Naive thymus-derived CD4-positive, alpha-beta T cell (primary cell): ENCODE measurements at regions of chr20 and their contacts with region 1.

Region 1: DNA sequence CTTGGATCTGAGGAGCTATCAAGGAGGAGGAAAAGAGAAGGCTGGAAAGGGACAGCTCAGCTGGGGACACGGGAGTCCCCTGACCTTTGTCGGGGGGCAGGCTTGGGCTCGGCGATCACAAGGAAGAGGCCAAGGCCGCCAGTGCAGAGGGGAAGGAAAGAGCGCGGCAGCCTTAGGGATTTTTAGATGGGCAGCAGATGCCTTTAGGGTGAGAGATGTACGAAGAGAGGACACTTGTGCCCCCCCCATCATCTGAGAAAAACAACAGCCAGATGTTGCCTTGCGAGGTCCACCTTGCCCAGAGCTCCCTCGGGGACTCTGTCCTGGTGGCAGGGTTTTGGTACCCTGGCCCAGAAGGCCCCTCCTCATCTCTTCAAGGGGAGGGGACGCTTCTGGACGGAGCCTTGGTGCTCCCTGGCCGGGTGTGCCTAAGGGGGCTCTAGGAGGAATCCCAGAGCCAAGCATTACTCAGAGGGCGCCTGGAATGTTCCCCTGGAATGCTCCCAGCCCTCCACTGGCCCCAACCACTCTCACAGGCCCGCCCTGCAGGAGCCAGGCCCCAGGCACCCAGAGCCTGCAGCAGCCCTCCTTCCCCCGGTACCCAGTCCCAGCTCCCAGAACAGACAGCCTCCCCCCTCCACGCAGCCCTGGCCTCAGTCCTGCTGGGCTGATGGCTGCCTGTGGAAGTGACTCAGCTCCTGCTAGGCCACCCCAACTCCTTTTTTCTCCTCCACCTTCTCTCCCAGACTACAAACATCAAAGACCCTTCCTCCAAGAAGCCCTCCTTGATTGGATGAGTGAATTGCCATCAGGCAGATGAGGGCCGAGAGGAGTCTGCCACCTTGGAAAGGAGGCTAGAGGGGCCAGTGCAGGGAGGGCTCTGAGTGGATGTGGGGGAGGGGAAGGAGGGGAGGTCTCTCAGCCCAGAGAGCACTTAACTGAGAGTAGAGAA is 1.8 kb downstream of the ADAM33 start:
- DNase-seq: no peak
- ATAC-seq: no peak
- H3K4me3 ChIP-seq: no peak overlapping the region
- H3K4me3 Mint-ChIP-seq: no peak overlapping the region
- H3K27ac ChIP-seq: no peak overlapping the region
- H3K27ac Mint-ChIP-seq: no peak overlapping the region
- H3K4me1 ChIP-seq: no peaks in the 10 kb centered on the region
- H3K4me1 Mint-ChIP-seq: peaks cover 0 to 9% (median 4%) of the 10 kb centered on the region in 7 donors
- H3K27me3 ChIP-seq: no peaks in the 10 kb centered on the region
- H3K27me3 Mint-ChIP-seq: peaks cover 47 to 71% (median 60%) of the 10 kb centered on the region in 5 donors

Region 2: GRCh38 chr20:3652676-3653596 is 27.1 kb before region 1 on chr20:
- CTCF ChIA-PET with region 1: no interaction called
- POLR2A ChIA-PET with region 1: no interaction called
- intact Hi-C with region 1: no loop called
- DNase-seq: no peak
- ATAC-seq: no peak
- H3K4me3 ChIP-seq: no peak overlapping the region
- H3K4me3 Mint-ChIP-seq: no peak overlapping the region
- H3K27ac ChIP-seq: no peak overlapping the region
- H3K27ac Mint-ChIP-seq: peak overlapping the region in 2 of 9 donors; percentile 17 to 21
- H3K4me1 ChIP-seq: no peaks in the 10 kb centered on the region
- H3K4me1 Mint-ChIP-seq: peaks cover 0 to 10% (median 0%) of the 10 kb centered on the region in 7 donors
- H3K27me3 ChIP-seq: no peaks in the 10 kb centered on the region
- H3K27me3 Mint-ChIP-seq: peaks cover 0 to 8% (median 0%) of the 10 kb centered on the region in 5 donors

Region 3: GRCh38 chr20:3710703-3711483 is 30.9 kb after region 1 on chr20:
- CTCF ChIA-PET with region 1: interaction called, 5 read pairs
- POLR2A ChIA-PET with region 1: no interaction called
- intact Hi-C with region 1: loop called (anchors 1 kb)
- DNase-seq: peak; percentile 43 to 86 (median 61)
- ATAC-seq: peak; percentile 62
- H3K4me3 ChIP-seq: no peak overlapping the region
- H3K4me3 Mint-ChIP-seq: no peak overlapping the region
- H3K27ac ChIP-seq: no peak overlapping the region
- H3K27ac Mint-ChIP-seq: no peak overlapping the region
- H3K4me1 ChIP-seq: no peaks in the 10 kb centered on the region
- H3K4me1 Mint-ChIP-seq: peaks cover 0 to 3% (median 0%) of the 10 kb centered on the region in 7 donors
- H3K27me3 ChIP-seq: no peaks in the 10 kb centered on the region
- H3K27me3 Mint-ChIP-seq: peaks cover 6 to 10% (median 7%) of the 10 kb centered on the region in 5 donors

Region 4: DNA sequence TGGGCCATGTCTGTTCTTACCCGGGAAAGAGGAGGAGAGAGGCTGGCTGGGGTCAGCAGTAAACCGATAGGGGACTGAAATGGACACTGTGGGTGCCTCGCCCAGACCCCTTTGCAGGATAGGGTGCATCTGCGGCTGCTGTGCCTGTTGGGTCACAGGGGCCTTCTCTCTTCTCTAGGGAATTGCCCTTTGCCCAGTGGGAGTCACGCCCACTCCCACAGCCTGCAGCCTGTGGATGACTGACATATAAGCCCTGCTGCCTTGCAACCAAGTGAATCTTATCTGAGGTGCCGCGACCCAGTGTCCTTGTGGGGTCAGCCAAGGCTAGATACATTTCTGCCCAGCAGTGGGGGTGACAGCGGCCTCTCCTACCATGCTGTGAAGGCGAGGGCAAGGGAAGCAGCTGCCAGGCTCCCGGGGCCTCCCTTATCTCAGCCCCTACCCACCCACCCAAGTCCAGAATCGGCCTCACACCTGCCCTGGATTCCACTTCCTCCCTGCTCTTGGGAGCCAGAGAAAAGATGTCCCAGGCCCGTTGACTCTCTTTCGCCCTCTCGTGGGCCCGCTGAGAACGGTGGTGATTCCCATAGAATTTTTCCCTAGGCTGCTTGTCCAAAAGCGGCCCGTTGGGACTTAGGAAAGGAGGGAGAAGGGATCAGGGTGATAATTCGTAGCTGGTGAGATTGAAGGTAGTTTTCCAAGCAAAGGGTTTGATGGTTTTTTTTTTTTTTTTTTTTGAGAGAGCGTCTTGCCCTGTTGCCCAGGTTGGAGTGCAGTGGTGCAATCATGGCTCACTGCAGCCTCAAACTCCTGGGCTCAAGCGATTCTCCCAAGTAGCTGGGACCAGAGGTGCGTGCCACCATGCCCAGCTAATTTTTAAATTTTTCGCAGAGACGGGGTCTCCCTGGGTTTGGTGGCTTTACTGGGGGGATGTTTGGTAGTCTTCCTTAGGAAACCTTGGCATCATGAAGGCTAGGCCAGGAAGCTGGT is 411.8 kb after region 1 on chr20:
- CTCF ChIA-PET with region 1: no interaction called
- POLR2A ChIA-PET with region 1: no interaction called
- intact Hi-C with region 1: loop called in 1 of 2 experiments (anchors 1 kb)
- DNase-seq: peak in 6 of 9 donors; percentile 6 to 62 (median 18)
- ATAC-seq: peak; percentile 51
- H3K4me3 ChIP-seq: no peak overlapping the region
- H3K4me3 Mint-ChIP-seq: no peak overlapping the region
- H3K27ac ChIP-seq: no peak overlapping the region
- H3K27ac Mint-ChIP-seq: peak overlapping the region in 1 of 9 donors; percentile 37
- H3K4me1 ChIP-seq: no peaks in the 10 kb centered on the region
- H3K4me1 Mint-ChIP-seq: peaks cover 0 to 5% (median 0%) of the 10 kb centered on the region in 7 donors
- H3K27me3 ChIP-seq: no peaks in the 10 kb centered on the region
- H3K27me3 Mint-ChIP-seq: peaks cover 9 to 23% (median 11%) of the 10 kb centered on the region in 5 donors

Region 5: GRCh38 chr20:4592316-4593148 is 912.5 kb after region 1 on chr20:
- CTCF ChIA-PET with region 1: no interaction called
- POLR2A ChIA-PET with region 1: no interaction called
- intact Hi-C with region 1: loop called in 1 of 2 experiments (anchors 1 kb)
- DNase-seq: peak; percentile 8 to 77 (median 51)
- ATAC-seq: peak; percentile 84
- H3K4me3 ChIP-seq: peak overlapping the region; percentile 56
- H3K4me3 Mint-ChIP-seq: peak overlapping the region; percentile 59 to 83 (median 76)
- H3K27ac ChIP-seq: no peak overlapping the region
- H3K27ac Mint-ChIP-seq: peak overlapping the region in 1 of 9 donors; percentile 7
- H3K4me1 ChIP-seq: peaks cover 7 to 8% of the 10 kb centered on the region in 2 donors
- H3K4me1 Mint-ChIP-seq: peaks cover 6 to 17% (median 8%) of the 10 kb centered on the region in 7 donors
- H3K27me3 ChIP-seq: no peaks in the 10 kb centered on the region
- H3K27me3 Mint-ChIP-seq: peaks cover 10 to 33% (median 16%) of the 10 kb centered on the region in 5 donors